MCF 10A (cell line): ENCODE measurements at regions of chr11 and their contacts with region 1.

Region 1: GRCh38 chr11:64553551-64554201 is 37.3 kb upstream of the SLC22A12 start:
- DNase-seq: peak; percentile 47
- H3K4me3 Mint-ChIP-seq: no peak overlapping the region
- H3K27ac Mint-ChIP-seq: no peak overlapping the region
- H3K4me1 Mint-ChIP-seq: no peaks in the 10 kb centered on the region
- H3K27me3 Mint-ChIP-seq: peaks cover 3% of the 10 kb centered on the region
- CTCF ChIP-seq: peak; percentile 97

Region 2: DNA sequence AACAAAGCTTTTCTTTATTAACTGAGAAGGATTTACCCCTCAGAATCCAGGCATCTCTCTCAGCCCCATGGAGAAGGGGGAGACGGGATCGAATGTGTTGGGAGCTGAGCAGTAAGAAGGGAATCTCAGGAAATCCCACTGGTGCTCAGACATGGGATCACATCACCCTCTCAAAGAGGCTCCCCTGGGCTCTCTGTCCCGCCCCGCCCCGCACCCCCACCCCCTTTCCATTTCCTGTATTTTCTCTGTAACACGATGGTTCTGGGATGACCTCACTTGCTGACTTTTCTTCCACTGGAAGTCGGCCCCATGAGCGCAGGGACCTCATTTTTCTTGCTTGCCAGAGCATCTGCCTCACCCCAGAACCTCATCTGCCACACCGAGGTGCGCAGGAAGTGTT is 94.7 kb before region 1 on chr11:
- CTCF ChIA-PET with region 1: no interaction called
- POLR2A ChIA-PET with region 1: no interaction called
- intact Hi-C with region 1: no loop called
- DNase-seq: no peak
- H3K4me3 Mint-ChIP-seq: no peak overlapping the region
- H3K27ac Mint-ChIP-seq: no peak overlapping the region
- H3K4me1 Mint-ChIP-seq: peaks cover 2% of the 10 kb centered on the region
- H3K27me3 Mint-ChIP-seq: no peaks in the 10 kb centered on the region
- CTCF ChIP-seq: no peak

Region 3: GRCh38 chr11:64489831-64490441 is 63.7 kb before region 1 on chr11:
- CTCF ChIA-PET with region 1: interaction called, 4 read pairs
- POLR2A ChIA-PET with region 1: no interaction called
- intact Hi-C with region 1: loop called (anchors 1 kb)
- DNase-seq: peak; percentile 60
- H3K4me3 Mint-ChIP-seq: no peak overlapping the region
- H3K27ac Mint-ChIP-seq: no peak overlapping the region
- H3K4me1 Mint-ChIP-seq: peaks cover 6% of the 10 kb centered on the region
- H3K27me3 Mint-ChIP-seq: peaks cover 75% of the 10 kb centered on the region
- CTCF ChIP-seq: peak; percentile 89

Region 4: DNA sequence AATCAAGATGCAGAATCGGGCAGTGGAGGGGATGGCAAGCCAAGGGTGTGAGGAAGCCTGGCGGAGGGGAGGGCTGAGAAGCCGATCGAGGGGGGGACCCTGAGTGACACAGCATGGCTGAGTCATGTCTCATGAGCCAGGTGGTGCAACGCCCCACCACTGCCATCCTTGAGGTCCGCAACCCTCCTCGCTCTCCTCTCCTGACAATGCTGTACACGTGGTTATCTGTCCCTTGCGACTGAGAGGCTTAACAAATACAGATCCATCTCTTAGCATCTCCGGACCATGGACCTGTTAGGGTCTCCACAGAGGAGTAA is 51.5 kb after region 1 on chr11:
- CTCF ChIA-PET with region 1: no interaction called
- POLR2A ChIA-PET with region 1: no interaction called
- intact Hi-C with region 1: no loop called
- DNase-seq: no peak
- H3K4me3 Mint-ChIP-seq: no peak overlapping the region
- H3K27ac Mint-ChIP-seq: no peak overlapping the region
- H3K4me1 Mint-ChIP-seq: no peaks in the 10 kb centered on the region
- H3K27me3 Mint-ChIP-seq: peaks cover 48% of the 10 kb centered on the region
- CTCF ChIP-seq: no peak

Region 5: DNA sequence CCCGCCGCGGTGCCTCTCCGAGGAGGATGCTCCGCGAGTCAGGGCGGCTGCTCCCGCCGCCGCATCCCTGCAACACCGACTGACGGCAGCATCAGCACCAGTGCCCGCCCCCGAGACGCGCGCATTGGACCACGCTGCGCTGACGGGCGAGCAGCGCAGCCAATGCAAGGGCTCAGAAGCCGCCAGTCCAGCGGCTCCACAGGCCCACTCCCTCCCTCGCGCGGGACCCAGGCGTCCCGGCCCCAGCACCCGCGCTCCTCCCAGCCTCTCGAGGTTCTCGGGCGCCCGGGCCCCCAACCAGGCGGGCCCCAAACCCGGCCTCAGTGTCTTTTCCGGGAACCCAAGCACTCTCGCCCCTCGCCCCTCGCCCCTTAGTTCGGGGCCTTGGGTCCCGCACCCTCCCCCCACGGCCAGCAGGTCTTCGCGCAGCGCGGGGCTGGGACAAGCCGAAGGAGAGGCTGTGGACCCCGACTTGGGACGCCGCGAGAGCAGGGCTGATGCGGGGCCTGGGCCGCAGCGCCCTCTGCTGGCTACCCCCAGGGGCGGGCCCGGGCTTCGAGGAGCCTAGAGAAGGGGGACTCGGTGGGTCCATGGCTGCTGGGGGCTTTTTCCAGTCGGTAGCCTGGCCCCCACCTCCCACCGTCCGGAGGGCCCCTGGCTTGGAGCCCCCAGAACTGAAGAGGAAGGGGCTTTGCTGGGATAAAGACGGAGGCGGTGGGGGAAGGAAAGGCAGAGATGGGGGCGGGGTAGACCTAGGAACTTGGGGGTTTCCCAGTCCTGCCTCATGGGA is 169.6 kb after region 1 on chr11 and contains the start of gene NRXN2:
- CTCF ChIA-PET with region 1: no interaction called
- POLR2A ChIA-PET with region 1: no interaction called
- intact Hi-C with region 1: loop called (anchors 1 kb)
- DNase-seq: peak; percentile 74
- H3K4me3 Mint-ChIP-seq: peak within 1 kb of the TSS; percentile 62
- H3K27ac Mint-ChIP-seq: no peak within 1 kb of the TSS
- H3K4me1 Mint-ChIP-seq: no peaks in the 10 kb centered on the region
- H3K27me3 Mint-ChIP-seq: peaks cover 62% of the 10 kb centered on the region
- CTCF ChIP-seq: peak; percentile 96
- total RNA-seq, gene NRXN2: not detected in 2 replicates

Region 6: DNA sequence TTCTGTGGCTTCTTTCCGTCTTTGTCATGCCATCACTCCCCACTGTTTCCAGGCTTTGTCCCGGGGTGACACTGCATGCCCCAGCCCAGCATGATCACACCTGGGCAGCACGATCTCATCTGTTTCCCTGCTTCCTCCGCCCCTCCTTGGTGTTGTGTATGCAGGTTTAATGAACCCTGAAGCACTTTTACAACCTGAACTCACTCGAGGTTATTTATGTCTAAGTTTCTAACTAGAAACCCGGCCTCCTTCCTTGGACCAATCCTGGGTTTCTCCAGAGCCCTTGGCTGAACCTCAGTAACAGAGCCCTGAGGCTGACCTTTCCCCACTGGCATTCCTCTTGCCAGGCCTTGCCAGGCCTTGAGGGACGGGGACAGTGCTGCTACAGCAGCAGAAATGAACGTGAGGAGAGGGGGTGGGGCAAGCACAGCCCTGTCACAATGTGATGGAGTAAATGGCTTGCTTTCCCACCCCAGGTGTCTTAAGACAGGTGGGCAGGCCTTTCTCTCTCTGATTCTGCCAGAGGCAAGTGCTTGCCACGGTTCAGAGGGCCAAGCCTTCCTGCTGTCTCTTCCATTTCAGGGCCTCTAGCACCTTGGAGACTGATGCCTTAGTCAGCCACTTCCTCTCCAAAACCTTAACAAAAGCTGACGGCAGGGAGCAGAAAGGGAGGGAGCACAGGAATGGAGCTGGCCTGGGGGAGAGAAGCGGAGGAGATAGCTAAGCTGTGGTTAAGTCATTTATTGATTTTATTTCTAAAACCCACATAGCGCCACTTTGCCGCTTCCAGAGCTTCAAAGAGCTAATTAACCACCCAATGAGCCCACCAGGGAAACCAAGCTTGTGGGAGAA is 209.2 kb after region 1 on chr11:
- CTCF ChIA-PET with region 1: no interaction called
- POLR2A ChIA-PET with region 1: no interaction called
- intact Hi-C with region 1: no loop called
- DNase-seq: no peak
- H3K4me3 Mint-ChIP-seq: no peak overlapping the region
- H3K27ac Mint-ChIP-seq: no peak overlapping the region
- H3K4me1 Mint-ChIP-seq: no peaks in the 10 kb centered on the region
- H3K27me3 Mint-ChIP-seq: no peaks in the 10 kb centered on the region
- CTCF ChIP-seq: no peak

Region 7: GRCh38 chr11:64990222-64990923 is 436.7 kb after region 1 on chr11:
- CTCF ChIA-PET with region 1: no interaction called
- POLR2A ChIA-PET with region 1: no interaction called
- intact Hi-C with region 1: no loop called
- DNase-seq: no peak
- H3K4me3 Mint-ChIP-seq: no peak overlapping the region
- H3K27ac Mint-ChIP-seq: no peak overlapping the region
- H3K4me1 Mint-ChIP-seq: no peaks in the 10 kb centered on the region
- H3K27me3 Mint-ChIP-seq: no peaks in the 10 kb centered on the region
- CTCF ChIP-seq: no peak